Activated CD4-positive, alpha-beta T cell treated with anti-CD3 and anti-CD28 coated beads for 36 hours (primary cell): ENCODE measurements at regions of chr2 and their contacts with region 1.

Region 1: DNA sequence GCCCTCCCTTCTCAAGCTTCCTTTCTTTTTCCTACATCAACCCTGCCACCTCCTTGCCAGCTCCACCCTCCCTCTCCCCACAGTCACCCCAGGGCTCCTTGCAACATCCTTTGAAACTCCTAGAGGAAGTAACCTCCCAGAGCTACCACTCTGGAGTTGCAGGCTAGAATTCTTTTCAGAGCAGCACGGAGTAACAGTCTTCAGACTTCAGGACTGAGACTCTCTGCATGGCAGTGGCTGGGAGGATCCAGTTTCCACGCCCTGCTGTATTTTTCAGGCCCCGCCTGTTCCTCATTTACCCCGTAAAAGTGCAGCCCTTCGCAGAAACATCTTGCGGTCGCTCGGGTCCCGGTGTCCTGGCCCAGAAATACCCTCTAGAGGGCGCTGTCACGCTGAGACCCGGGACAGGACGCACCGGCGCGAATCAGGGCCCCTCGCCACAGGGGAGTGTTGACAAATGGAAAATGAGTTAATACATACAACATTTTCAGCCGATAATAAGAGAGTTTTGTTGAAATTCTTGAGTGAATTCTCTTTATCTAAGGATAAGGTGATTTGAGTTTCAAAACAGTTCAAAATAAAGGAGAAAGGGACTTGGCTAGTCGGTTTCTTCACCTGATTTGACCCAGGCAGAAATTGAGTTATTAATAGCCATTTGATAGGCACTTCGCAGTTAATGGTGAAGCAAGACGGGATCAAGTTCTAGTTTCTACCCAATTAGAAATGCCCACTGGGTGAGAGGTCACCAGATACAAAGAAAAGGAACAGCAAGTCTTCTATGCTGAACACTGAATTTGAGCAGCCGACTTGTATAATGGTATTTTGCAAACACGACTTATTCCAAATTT is 18.5 kb upstream of the NTSR2 start:
- DNase-seq: peak; percentile 92
- ATAC-seq: peak; percentile 95
- H3K4me3 Mint-ChIP-seq: no peak overlapping the region
- H3K27ac Mint-ChIP-seq: no peak overlapping the region
- H3K4me1 Mint-ChIP-seq: peaks cover 9% of the 10 kb centered on the region
- H3K27me3 Mint-ChIP-seq: peaks cover 5% of the 10 kb centered on the region

Region 2: DNA sequence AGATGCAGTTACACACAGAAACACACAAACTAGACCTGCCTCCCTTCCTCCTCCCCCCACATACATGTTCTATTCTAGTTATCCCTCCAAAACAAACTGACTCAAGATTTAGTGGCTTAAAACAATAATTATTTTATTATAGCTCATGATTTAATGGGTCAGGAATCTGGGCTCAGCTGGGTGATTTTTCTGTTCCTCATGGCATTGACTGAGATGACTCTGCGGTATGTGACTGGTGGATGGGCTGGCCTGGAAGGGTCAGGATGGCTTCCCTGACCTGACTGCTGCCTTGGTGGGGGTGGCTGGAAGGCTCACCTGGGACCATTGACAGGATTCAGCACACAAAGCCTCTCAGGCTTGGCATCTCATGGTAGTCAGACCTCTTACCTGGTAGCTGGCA is 15.3 kb after region 1 on chr2:
- CTCF ChIA-PET with region 1: interaction called, 14 read pairs
- POLR2A ChIA-PET with region 1: no interaction called
- intact Hi-C with region 1: no loop called
- DNase-seq: no peak
- ATAC-seq: no peak
- H3K4me3 Mint-ChIP-seq: no peak overlapping the region
- H3K27ac Mint-ChIP-seq: no peak overlapping the region
- H3K4me1 Mint-ChIP-seq: no peaks in the 10 kb centered on the region
- H3K27me3 Mint-ChIP-seq: no peaks in the 10 kb centered on the region